WTC11 (cell line): ENCODE measurements at regions of chr10 and their contacts with region 1.

Region 1: DNA sequence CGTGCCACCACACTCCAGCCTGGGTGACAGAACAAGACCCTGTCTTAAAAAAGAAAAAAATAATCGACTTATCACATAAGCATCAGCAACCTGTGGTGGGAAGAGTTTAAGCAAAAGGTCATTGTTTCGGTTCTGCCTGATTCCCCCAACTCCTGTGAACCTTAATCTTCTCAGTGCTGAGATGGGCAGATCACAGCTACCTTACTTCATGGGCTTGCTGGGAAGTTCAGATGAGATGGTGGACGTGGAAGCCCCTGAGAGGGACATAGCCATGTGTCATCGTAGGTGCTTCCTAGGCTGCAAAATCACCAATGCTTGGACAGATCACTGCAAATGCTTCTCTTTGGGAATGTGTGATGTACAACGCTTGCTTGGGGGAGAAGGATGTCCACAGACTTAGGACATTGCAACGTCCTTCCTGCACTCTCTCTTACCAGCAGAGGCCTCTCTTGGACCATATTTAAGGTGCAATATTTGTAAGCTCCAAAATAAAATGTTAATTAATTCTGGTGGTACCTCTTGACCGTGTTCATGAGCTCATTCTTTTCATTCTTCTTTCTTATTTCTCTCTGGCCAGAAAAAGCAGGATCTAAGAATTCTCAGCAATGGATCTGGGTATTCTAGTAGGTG is 8.6 kb downstream of the GJD4 start:
- DNase-seq: no peak
- ATAC-seq: peak; percentile 47; the same call in 1 of the 2 replicates
- H3K4me3 Mint-ChIP-seq: no peak overlapping the region
- H3K27ac Mint-ChIP-seq: no peak overlapping the region
- H3K4me1 Mint-ChIP-seq: peaks cover 5% of the 10 kb centered on the region; the same call in 1 of the 2 replicates
- H3K27me3 Mint-ChIP-seq: peaks cover 4% of the 10 kb centered on the region; the same call in 1 of the 2 replicates
- CTCF ChIP-seq: no peak

Region 2: GRCh38 chr10:35563261-35563891 is 50.3 kb before region 1 on chr10:
- CTCF ChIA-PET with region 1: interaction called, 22 read pairs
- POLR2A ChIA-PET with region 1: interaction called, 6 read pairs
- DNase-seq: peak; percentile 66
- ATAC-seq: peak; percentile 74
- H3K4me3 Mint-ChIP-seq: no peak overlapping the region
- H3K27ac Mint-ChIP-seq: no peak overlapping the region
- H3K4me1 Mint-ChIP-seq: peaks cover 3% of the 10 kb centered on the region; the same call in 1 of the 2 replicates
- H3K27me3 Mint-ChIP-seq: no peaks in the 10 kb centered on the region
- CTCF ChIP-seq: peak; percentile 98

Region 3: GRCh38 chr10:35600193-35600592 is 13.5 kb before region 1 on chr10:
- CTCF ChIA-PET with region 1: interaction called, 20 read pairs
- POLR2A ChIA-PET with region 1: interaction called, 3 read pairs
- DNase-seq: no peak
- ATAC-seq: no peak; the same call in 1 of the 2 replicates
- H3K4me3 Mint-ChIP-seq: no peak overlapping the region
- H3K27ac Mint-ChIP-seq: no peak overlapping the region
- H3K4me1 Mint-ChIP-seq: peaks cover 17% of the 10 kb centered on the region
- H3K27me3 Mint-ChIP-seq: no peaks in the 10 kb centered on the region; the same call in none of the 2 replicates
- CTCF ChIP-seq: no peak

Region 4: DNA sequence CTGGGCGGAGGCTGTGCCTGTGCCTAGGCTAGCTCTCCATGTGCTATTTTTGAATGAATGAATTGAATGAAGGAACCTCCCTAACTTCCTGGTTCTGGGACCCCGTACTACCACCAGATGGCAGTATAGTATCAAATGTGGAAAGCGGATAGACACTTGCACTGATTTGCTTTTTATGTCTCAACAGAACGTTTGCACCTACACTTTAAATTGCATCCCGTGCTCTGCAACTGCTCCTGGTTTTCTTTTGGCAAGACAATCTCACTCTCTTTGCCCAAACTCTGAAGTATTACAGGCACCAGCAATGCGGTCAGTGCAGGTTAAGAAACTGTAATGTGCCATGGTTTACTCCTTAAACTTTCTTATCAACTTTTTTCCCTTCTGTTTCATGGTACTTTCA is 21.9 kb after region 1 on chr10:
- CTCF ChIA-PET with region 1: interaction called, 17 read pairs
- POLR2A ChIA-PET with region 1: no interaction called
- DNase-seq: peak; percentile 20
- ATAC-seq: no peak
- H3K4me3 Mint-ChIP-seq: no peak overlapping the region
- H3K27ac Mint-ChIP-seq: no peak overlapping the region
- H3K4me1 Mint-ChIP-seq: peaks cover 45% of the 10 kb centered on the region
- H3K27me3 Mint-ChIP-seq: peaks cover 19% of the 10 kb centered on the region
- CTCF ChIP-seq: peak; percentile 80

Region 5: GRCh38 chr10:35700487-35700882 is 86.8 kb after region 1 on chr10:
- CTCF ChIA-PET with region 1: no interaction called
- POLR2A ChIA-PET with region 1: no interaction called
- DNase-seq: peak; percentile 59
- ATAC-seq: peak; percentile 93
- H3K4me3 Mint-ChIP-seq: 0 out of 2 replicates have a peak overlapping the region, but pooled peaks have one; percentile 3
- H3K27ac Mint-ChIP-seq: no peak overlapping the region
- H3K4me1 Mint-ChIP-seq: peaks cover 50% of the 10 kb centered on the region
- H3K27me3 Mint-ChIP-seq: peaks cover 40% of the 10 kb centered on the region
- CTCF ChIP-seq: no peak

Region 6: GRCh38 chr10:36880898-36881297 is 1267.2 kb after region 1 on chr10:
- CTCF ChIA-PET with region 1: interaction called, 11 read pairs
- POLR2A ChIA-PET with region 1: no interaction called
- DNase-seq: no peak
- ATAC-seq: no peak
- H3K4me3 Mint-ChIP-seq: no peak overlapping the region
- H3K27ac Mint-ChIP-seq: no peak overlapping the region
- H3K4me1 Mint-ChIP-seq: no peaks in the 10 kb centered on the region
- H3K27me3 Mint-ChIP-seq: peaks cover 5% of the 10 kb centered on the region; the same call in 1 of the 2 replicates
- CTCF ChIP-seq: no peak